ENCODE measurements at regions of chr16 and their contacts with region 1.

Region 1: DNA sequence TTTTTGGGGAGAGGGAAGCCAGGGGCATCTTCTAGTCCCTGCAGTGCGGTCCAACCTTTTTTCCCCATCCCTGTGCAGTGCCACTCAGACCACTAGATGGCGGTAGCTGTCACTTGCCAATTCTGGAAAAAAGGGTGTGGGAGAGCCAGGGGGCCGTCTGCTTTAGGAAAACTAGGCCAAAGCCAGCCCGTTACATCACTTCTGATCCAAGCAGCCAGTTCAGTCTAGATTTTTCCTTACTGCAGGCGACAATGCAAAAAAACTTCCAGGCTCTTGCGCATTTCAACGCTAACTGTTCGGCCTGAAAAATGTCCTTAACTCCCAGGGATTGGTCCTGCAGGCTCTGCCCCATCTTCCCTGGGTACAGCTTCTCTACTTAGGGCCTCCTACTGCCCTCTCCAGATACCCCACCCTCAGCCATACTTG is 69.2 kb upstream of the CES5A start:
- DNase-seq: peak; percentile 37
- H3K4me3 ChIP-seq: no peak overlapping the region
- H3K27ac ChIP-seq: no peak overlapping the region
- H3K27me3 ChIP-seq: no peaks in the 10 kb centered on the region
- CTCF ChIP-seq: peak; percentile 98

Region 2: DNA sequence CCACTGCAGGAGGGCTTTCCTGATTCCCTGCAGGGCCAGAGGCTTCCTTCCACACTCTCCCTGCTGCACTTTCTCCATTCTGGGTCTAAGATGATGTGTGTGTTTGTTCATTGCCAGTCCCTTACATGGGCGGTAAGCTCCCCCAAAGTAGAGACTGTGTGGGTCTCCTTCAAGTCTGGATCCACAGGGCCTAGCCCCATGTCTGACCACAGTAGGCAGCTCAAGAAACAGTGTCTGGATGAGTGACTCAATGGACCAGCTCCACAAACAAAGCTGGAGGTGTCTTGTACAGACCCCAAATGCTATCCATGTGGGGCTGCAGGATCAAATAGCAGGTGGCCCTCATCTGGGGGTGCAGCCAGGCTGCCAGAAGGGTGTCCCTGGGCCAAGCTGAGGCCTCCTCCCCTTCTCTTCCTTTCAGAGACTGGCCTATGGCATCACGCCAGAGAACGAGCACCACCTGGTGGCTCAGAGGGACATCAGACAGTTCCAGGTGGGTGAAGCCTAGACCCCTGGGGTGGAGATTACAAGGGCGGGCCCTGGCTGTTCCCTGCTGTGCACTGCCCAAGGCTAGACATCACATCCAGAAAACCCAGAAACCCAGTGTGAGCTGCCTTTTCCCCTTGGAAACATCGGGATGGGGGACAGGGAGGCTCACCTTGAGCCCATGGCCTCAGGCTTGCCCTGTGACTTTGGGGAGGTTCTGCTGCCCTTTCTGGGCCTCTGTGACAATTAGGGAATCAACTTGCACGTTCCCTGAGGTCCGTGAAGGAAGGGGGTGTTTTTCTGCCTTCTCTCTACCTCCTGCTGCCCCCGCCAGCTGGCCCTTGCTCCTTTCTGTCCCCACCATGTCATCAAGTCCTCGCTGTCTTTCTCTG is 242.7 kb before region 1 on chr16:
- in situ Hi-C with region 1: no loop called
- DNase-seq: peak; percentile 20
- H3K4me3 ChIP-seq: no peak overlapping the region
- H3K27ac ChIP-seq: no peak overlapping the region
- H3K27me3 ChIP-seq: no peaks in the 10 kb centered on the region
- CTCF ChIP-seq: peak; percentile 76

Region 3: GRCh38 chr16:56317998-56318826 is 373.8 kb after region 1 on chr16:
- in situ Hi-C with region 1: loop called (anchors 25 kb)
- DNase-seq: peak; percentile 64
- H3K4me3 ChIP-seq: peak overlapping the region; percentile 40
- H3K27ac ChIP-seq: no peak overlapping the region
- H3K27me3 ChIP-seq: no peaks in the 10 kb centered on the region
- CTCF ChIP-seq: peak; percentile 96

Measured in brain microvascular endothelial cell (primary cell).